Endothelial cell of umbilical vein (primary cell): ENCODE measurements at regions of chr10 and their contacts with region 1.

Region 1: DNA sequence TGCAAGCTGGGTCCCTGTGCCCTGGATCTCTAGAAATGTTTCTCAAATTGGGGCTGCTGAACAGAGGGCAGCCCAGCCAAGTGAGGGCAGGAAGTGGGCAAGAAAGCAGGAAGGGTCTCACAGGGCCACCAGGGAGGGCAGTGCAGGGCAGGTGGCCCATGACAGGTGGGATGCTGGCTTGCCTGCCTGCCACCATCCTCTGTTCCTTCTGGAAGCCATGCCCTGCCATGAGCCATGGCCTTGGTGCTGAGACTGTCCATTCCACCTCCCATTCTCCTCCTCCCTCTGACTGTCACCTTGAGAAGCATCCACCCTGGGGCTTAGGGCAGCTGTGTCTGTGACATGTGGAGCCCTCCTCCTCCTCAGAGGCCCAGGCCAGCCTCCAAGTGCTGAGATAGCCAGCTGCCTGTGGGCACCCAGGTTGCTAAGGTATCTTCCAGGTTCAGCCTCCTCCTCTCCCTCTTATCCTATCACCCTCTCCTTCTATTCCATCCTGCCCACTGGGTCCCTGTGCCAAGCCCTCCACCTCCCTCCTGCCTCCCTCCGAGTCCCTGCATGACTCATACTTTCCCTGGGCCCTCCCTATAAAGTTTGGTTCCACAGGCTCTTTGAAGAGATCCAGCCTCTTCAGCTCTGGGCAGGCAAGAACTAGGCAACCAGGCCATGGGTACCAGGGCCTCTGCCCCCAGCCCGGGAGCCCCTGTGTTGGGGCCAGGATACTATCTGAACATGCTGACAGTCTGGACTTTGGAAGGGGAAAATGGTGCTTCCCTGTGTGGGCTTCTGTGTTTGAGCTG is 1.3 kb downstream of the VSIR start:
- DNase-seq: peak; percentile 32
- H3K4me3 ChIP-seq: no peak overlapping the region
- H3K27ac ChIP-seq: no peak overlapping the region
- H3K4me1 ChIP-seq: peaks cover 36% of the 10 kb centered on the region
- H3K27me3 ChIP-seq: no peaks in the 10 kb centered on the region
- CTCF ChIP-seq: no peak
- POLR2A ChIP-seq: no peak

Region 2: DNA sequence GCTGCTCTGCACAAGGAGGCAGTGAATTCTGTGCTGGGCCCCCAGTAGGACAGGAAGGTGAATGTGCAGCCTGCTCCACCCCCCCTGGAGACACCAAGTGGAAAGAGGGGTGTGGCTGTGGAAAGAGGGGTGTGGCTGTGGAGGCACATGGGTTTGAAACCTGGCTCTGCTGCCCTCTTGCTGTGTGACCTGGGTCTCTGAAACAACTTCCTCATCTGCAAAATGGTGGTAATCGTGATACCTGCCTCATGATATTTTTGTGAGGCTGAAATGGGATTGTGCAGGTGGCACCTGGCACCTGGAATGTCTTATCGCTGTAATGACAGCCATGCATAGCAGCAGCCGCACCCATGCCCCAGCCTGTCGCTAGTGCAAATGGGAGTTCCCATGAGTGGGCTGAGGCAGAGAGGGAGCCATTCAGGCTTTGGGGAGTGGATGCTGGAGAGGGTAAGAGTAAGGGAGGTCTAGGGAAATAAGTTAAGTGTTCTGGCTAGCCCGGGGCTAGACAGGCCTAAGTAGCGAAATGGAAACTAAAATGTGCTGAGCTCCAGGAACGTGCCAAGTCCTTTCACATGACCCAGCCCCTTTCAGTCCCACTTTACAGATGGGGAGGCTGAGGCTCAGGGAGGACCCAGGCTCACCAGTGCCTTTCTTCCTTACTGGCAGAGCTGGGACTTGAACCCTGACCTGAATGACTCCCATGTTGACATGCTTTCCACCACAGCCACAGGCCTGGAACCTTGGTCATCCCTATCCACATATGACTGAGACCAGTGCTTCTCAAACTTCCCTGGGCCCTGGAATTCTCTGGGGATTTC is 87.5 kb before region 1 on chr10:
- CTCF ChIA-PET with region 1: no interaction called
- POLR2A ChIA-PET with region 1: no interaction called
- dilution Hi-C with region 1: no loop called
- intact Hi-C with region 1: no loop called
- DNase-seq: no peak
- H3K4me3 ChIP-seq: no peak overlapping the region
- H3K27ac ChIP-seq: no peak overlapping the region
- H3K4me1 ChIP-seq: no peaks in the 10 kb centered on the region
- H3K27me3 ChIP-seq: peaks cover 6 to 16% of the 10 kb centered on the region in 2 experiments
- CTCF ChIP-seq: no peak
- POLR2A ChIP-seq: no peak

Region 3: GRCh38 chr10:71782917-71783490 is 11.0 kb after region 1 on chr10:
- CTCF ChIA-PET with region 1: interaction called, 21 read pairs
- POLR2A ChIA-PET with region 1: no interaction called
- dilution Hi-C with region 1: no loop called
- intact Hi-C with region 1: no loop called
- DNase-seq: no peak
- H3K4me3 ChIP-seq: no peak overlapping the region
- H3K27ac ChIP-seq: no peak overlapping the region
- H3K4me1 ChIP-seq: no peaks in the 10 kb centered on the region
- H3K27me3 ChIP-seq: no peaks in the 10 kb centered on the region
- CTCF ChIP-seq: no peak
- POLR2A ChIP-seq: no peak